ENCODE measurements at regions of chr9 and their contacts with region 1.

Region 1: GRCh38 chr9:133347985-133348717 is at the starts of genes MED22 and RPL7A:
- DNase-seq: peak; percentile 91
- ATAC-seq: peak; percentile 84
- H3K4me3 ChIP-seq: peak within 1 kb of the TSS; percentile 100
- H3K27ac ChIP-seq: peak within 1 kb of the TSS; percentile 96
- H3K4me1 ChIP-seq: peaks cover 12% of the 10 kb centered on the region
- H3K27me3 ChIP-seq: no peaks in the 10 kb centered on the region
- CTCF ChIP-seq: no peak
- EP300 ChIP-seq: no peak
- POLR2A ChIP-seq: peak; percentile 99
- RAD21 ChIP-seq: no peak
- polyA plus RNA-seq, gene MED22: 1.4 to 3.4 TPM
- polyA plus RNA-seq, gene RPL7A: 3,258 to 3,500 TPM

Region 2: GRCh38 chr9:132560616-132561202 is 787.4 kb before region 1 on chr9:
- CTCF ChIA-PET with region 1: no interaction called
- POLR2A ChIA-PET with region 1: no interaction called
- RAD21 ChIA-PET with region 1: no interaction called
- SMC1A ChIA-PET with region 1: no interaction called
- in situ Hi-C with region 1: no loop called
- intact Hi-C with region 1: no loop called
- DNase-seq: no peak
- ATAC-seq: no peak
- H3K4me3 ChIP-seq: no peak overlapping the region
- H3K27ac ChIP-seq: no peak overlapping the region
- H3K4me1 ChIP-seq: no peaks in the 10 kb centered on the region
- H3K27me3 ChIP-seq: peaks cover 0 to 3% of the 10 kb centered on the region in 2 experiments; a peak in 2 of 4 replicates
- CTCF ChIP-seq: no peak
- EP300 ChIP-seq: no peak
- POLR2A ChIP-seq: no peak
- RAD21 ChIP-seq: no peak

Region 3: DNA sequence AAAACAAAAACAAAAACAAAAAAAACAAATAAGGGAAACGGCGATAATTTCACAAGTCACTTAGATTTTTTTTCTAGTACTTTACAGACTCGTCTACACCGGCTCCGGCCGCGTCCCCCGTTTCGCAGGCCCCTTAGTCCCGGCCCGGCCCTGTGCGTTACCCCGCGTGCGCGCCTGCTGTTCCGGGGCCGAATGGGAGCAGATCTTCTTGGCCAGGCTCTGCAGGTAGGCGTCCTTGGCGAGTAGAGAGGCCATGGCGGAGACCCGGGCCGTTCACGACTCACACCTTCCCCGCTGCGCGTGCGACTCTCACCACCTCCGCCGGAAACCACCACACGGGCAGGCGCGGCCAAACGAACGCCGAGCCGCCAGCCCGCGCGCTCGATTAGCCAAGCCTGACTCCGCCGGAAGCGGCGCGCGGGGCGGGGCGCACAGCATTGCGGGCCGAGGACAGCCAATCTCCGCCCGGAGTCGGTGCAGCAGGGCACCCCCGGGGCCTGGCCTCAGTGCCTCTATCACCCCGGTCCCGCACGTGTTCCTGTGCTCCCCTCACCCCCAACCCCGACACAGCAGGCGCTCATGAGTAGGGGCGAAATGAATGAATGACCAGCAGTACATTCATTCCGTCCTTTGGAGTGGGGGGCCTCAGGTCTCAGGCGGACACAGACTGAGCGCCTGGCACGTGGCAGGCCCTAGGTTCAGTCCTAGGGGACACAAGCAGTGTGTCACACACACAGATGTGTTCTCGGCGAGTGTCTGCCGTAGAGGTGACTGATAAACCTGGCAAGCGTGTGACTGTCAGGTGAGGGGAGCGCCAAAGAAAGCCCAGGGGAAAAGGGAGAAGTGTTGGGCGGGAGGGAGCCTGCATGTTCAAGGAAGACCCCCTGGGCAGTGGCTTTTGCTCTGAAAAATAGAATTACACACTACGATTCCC is 12.0 kb before region 1 on chr9 and contains the start of gene SURF6:
- CTCF ChIA-PET with region 1: no interaction called
- POLR2A ChIA-PET with region 1: interaction called, 8 read pairs
- RAD21 ChIA-PET with region 1: no interaction called
- SMC1A ChIA-PET with region 1: interaction called, 5 read pairs
- in situ Hi-C with region 1: no loop called
- intact Hi-C with region 1: loop called (anchors 1 kb)
- DNase-seq: peak; percentile 69
- ATAC-seq: peak; percentile 98
- H3K4me3 ChIP-seq: peak within 1 kb of the TSS; percentile 98
- H3K27ac ChIP-seq: peak within 1 kb of the TSS; percentile 82
- H3K4me1 ChIP-seq: peaks cover 9% of the 10 kb centered on the region
- H3K27me3 ChIP-seq: no peaks in the 10 kb centered on the region
- CTCF ChIP-seq: no peak
- EP300 ChIP-seq: no peak
- POLR2A ChIP-seq: peak; percentile 90
- RAD21 ChIP-seq: no peak
- polyA plus RNA-seq, gene SURF6: 2.2 to 3.0 TPM